ENCODE measurements at regions of chr11 and their contacts with region 1.

Region 1: GRCh38 chr11:123020968-123021367 is 39.3 kb upstream of the BSX start:
- DNase-seq: peak; percentile 49
- H3K4me3 ChIP-seq: no peak overlapping the region
- H3K27ac ChIP-seq: no peak overlapping the region
- H3K4me1 ChIP-seq: no peaks in the 10 kb centered on the region
- H3K27me3 ChIP-seq: no peaks in the 10 kb centered on the region
- CTCF ChIP-seq: peak in 1 of 3 experiments; percentile 28
- POLR2A ChIP-seq: no peak

Region 2: DNA sequence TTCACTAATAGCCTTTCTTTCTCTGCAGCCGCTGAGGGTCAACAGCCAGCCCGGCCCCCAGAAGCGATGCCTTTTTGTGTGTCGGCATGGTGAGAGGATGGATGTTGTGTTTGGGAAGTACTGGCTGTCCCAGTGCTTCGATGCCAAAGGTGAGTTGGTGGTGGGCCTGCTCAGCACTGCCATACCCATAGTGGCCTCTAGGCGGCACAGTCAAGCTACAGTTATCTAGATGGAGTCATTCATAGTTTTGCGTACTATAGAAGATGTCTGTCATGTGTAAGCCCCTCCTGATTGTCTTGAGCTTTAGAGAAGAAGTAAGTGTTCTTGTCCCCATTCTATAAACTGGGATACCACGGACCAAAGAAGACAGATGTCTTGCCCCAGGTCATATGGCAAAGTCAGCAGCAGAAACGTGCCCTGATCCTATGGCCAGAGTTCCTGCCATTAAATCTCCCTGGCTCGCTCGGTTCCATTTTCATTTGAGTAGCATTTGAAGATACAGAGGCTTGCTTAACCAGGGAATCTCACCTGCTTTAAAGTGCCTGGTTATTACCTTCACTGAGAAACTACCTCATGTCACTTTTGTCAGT is 224.7 kb before region 1 on chr11:
- intact Hi-C with region 1: no loop called
- DNase-seq: peak; percentile 63
- H3K4me3 ChIP-seq: no peak overlapping the region
- H3K27ac ChIP-seq: no peak overlapping the region
- H3K4me1 ChIP-seq: no peaks in the 10 kb centered on the region
- H3K27me3 ChIP-seq: no peaks in the 10 kb centered on the region
- CTCF ChIP-seq: peak; percentile 45 to 75 (median 56)
- POLR2A ChIP-seq: no peak

Region 3: GRCh38 chr11:122863704-122864326 is 157.2 kb before region 1 on chr11:
- intact Hi-C with region 1: loop called (anchors 10 kb)
- DNase-seq: peak; percentile 62
- H3K4me3 ChIP-seq: no peak overlapping the region
- H3K27ac ChIP-seq: no peak overlapping the region
- H3K4me1 ChIP-seq: no peaks in the 10 kb centered on the region
- H3K27me3 ChIP-seq: no peaks in the 10 kb centered on the region
- CTCF ChIP-seq: peak; percentile 79 to 88 (median 81)
- POLR2A ChIP-seq: no peak